Dendritic cell treated with granulocyte-macrophage colony-stimulating factor and Interleukin-4, amounts not matched to agents 40 ng/mL and 50 ng/mL, for 4 days (primary cell): ENCODE measurements at regions of chr1 and their contacts with region 1.

Region 1: GRCh38 chr1:200669314-200670241 is at the start of gene DDX59:
- H3K4me3 Mint-ChIP-seq: peak within 1 kb of the TSS; percentile 93
- H3K27ac Mint-ChIP-seq: peak within 1 kb of the TSS; percentile 98
- H3K4me1 Mint-ChIP-seq: peaks cover 39% of the 10 kb centered on the region
- H3K27me3 Mint-ChIP-seq: no peaks in the 10 kb centered on the region

Region 2: DNA sequence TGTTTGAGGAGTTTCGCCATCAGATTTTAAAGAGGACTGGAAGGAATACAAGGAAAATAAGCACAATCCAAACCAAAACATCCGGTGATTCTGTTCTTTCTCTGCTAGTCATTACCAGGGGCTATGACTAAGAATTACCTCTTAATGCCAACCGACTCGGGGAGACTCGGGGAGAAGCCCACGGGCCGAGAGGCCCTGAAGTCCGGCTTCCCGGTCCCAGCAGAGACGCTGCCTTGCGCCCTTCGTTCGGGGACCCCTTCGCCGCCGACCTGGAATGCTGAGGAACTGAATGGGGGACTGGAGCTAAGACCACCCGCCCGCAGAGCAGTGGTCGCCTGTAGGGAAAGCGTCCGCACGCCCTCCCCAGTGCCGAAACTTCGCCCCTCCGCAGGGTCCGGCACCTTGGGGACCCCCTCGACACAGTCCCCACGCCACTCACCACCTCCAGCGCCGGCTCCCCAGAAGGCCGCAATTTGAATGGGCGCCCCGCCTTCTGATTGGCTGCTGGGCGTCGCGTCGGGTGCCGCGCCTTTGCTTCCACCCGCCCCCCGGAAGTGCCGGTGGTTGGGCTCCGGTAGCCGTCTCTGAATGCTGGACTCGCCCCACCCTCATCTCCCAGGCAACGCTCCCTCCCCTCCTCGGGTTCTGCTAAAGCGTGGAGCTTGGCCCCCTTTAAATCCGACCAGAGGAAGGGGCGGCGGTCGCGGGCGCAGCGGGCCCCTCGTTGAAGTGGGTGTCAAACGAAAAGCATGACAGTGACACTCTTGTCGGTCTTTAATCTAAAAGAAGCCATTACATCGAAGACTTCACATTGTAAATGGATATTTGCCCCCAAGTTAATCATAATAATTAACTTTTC is 49.1 kb before region 1 on chr1 and contains the start of gene KIF14:
- intact Hi-C with region 1: loop called (anchors 2 kb)
- H3K4me3 Mint-ChIP-seq: peak within 1 kb of the TSS; percentile 93
- H3K27ac Mint-ChIP-seq: peak within 1 kb of the TSS; percentile 94
- H3K4me1 Mint-ChIP-seq: peaks cover 9% of the 10 kb centered on the region
- H3K27me3 Mint-ChIP-seq: no peaks in the 10 kb centered on the region

Region 3: DNA sequence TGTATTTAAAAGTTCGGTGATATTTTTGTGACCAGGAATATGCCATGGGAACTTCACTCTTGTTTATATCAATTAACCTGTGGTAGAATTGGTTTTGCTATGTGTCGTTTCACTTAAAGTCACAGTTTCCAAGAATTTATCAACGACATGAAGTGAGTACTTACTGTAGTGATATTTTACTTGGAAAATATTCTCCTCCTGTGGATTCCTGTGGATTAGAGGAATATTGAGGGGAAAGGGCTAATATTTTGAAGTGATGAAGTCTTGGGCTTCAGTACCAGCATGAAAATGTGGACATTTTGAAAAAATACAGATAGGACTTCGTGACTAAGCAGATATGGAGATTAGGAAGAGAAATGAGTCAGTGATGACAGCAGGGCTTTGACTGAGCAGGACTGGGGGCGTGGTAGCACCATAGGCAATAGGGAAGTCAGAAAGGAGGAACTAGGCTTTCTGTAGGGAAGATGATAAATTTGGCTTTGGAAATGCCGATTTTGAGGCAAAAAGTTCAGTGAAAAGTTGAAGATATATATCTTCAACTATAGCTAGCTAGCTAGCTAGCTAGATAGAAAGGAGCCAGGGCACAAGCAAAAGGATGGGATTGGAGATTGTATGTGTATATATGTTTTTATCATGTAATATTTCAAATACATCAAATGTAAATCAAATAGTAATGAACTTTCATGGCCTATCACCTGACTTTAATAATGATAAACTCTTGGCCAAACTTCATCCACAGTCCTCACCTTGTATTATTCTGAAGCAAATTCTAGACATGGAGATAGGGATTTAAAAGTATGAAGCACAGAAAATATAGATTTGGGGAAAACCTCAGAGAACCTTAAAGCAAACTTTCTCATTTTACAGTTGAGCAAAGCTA is 29.5 kb before region 1 on chr1:
- intact Hi-C with region 1: loop called (anchors 1 kb)
- H3K4me3 Mint-ChIP-seq: no peak overlapping the region
- H3K27ac Mint-ChIP-seq: peak overlapping the region; percentile 84
- H3K4me1 Mint-ChIP-seq: peaks cover 36% of the 10 kb centered on the region
- H3K27me3 Mint-ChIP-seq: no peaks in the 10 kb centered on the region

Region 4: GRCh38 chr1:200654660-200655059 is 14.9 kb before region 1 on chr1:
- intact Hi-C with region 1: loop called (anchors 2 kb)
- H3K4me3 Mint-ChIP-seq: no peak overlapping the region
- H3K27ac Mint-ChIP-seq: peak overlapping the region; percentile 69
- H3K4me1 Mint-ChIP-seq: peaks cover 45% of the 10 kb centered on the region
- H3K27me3 Mint-ChIP-seq: no peaks in the 10 kb centered on the region

Region 5: GRCh38 chr1:200738740-200739498 is 69.3 kb after region 1 on chr1 and contains the start of gene CAMSAP2:
- intact Hi-C with region 1: loop called (anchors 5 kb)
- H3K4me3 Mint-ChIP-seq: peak within 1 kb of the TSS; percentile 99
- H3K27ac Mint-ChIP-seq: peak within 1 kb of the TSS; percentile 100
- H3K4me1 Mint-ChIP-seq: peaks cover 42% of the 10 kb centered on the region
- H3K27me3 Mint-ChIP-seq: peaks cover 27% of the 10 kb centered on the region

Region 6: GRCh38 chr1:200780545-200781369 is 111.2 kb after region 1 on chr1:
- intact Hi-C with region 1: no loop called
- H3K4me3 Mint-ChIP-seq: no peak overlapping the region
- H3K27ac Mint-ChIP-seq: no peak overlapping the region
- H3K4me1 Mint-ChIP-seq: peaks cover 15% of the 10 kb centered on the region
- H3K27me3 Mint-ChIP-seq: no peaks in the 10 kb centered on the region

Region 7: GRCh38 chr1:200802865-200803512 is 133.4 kb after region 1 on chr1:
- intact Hi-C with region 1: loop called (anchors 10 kb)
- H3K4me3 Mint-ChIP-seq: no peak overlapping the region
- H3K27ac Mint-ChIP-seq: no peak overlapping the region
- H3K4me1 Mint-ChIP-seq: peaks cover 18% of the 10 kb centered on the region
- H3K27me3 Mint-ChIP-seq: no peaks in the 10 kb centered on the region